Head of caudate nucleus (tissue), 42 donors: ENCODE measurements at regions of chr9 and their contacts with region 1.

Region 1: GRCh38 chr9:84397151-84397728 is 56.7 kb upstream of the SLC28A3 start:
- DNase-seq: peak; percentile 12 to 89 (median 77)

Region 2: GRCh38 chr9:84293001-84293798 is 104.0 kb before region 1 on chr9:
- intact Hi-C with region 1: no loop called
- DNase-seq: no peak

Region 3: GRCh38 chr9:84953797-84954705 is 556.8 kb after region 1 on chr9:
- intact Hi-C with region 1: loop called (anchors 10 kb)
- DNase-seq: peak; percentile 75 to 96 (median 89)